Activated CD4-positive, alpha-beta T cell treated with anti-CD3 and anti-CD28 coated beads, Interleukin-2, amount 10 ng/mL, durations not matched to agents 24 days and 14 days (primary cell): ENCODE measurements at regions of chr12 and their contacts with region 1.

Region 1: GRCh38 chr12:123713398-123713797 is 1.2 kb downstream of the ATP6V0A2 start:
- DNase-seq: peak; percentile 74
- H3K4me3 Mint-ChIP-seq: peak overlapping the region; percentile 98
- H3K27ac Mint-ChIP-seq: peak overlapping the region; percentile 93
- H3K4me1 Mint-ChIP-seq: peaks cover 36% of the 10 kb centered on the region
- H3K27me3 Mint-ChIP-seq: no peaks in the 10 kb centered on the region

Region 2: GRCh38 chr12:122732170-122732569 is 981.2 kb before region 1 on chr12:
- intact Hi-C with region 1: loop called (anchors 2 kb)
- DNase-seq: peak; percentile 79
- H3K4me3 Mint-ChIP-seq: peak overlapping the region; percentile 78
- H3K27ac Mint-ChIP-seq: peak overlapping the region; percentile 86
- H3K4me1 Mint-ChIP-seq: peaks cover 62% of the 10 kb centered on the region
- H3K27me3 Mint-ChIP-seq: no peaks in the 10 kb centered on the region

Region 3: GRCh38 chr12:123580772-123581171 is 132.6 kb before region 1 on chr12:
- intact Hi-C with region 1: loop called (anchors 5 kb)
- DNase-seq: no peak
- H3K4me3 Mint-ChIP-seq: no peak overlapping the region
- H3K27ac Mint-ChIP-seq: no peak overlapping the region
- H3K4me1 Mint-ChIP-seq: peaks cover 25% of the 10 kb centered on the region
- H3K27me3 Mint-ChIP-seq: no peaks in the 10 kb centered on the region

Region 4: GRCh38 chr12:123670882-123671728 is 42.3 kb before region 1 on chr12 and contains the start of gene TCTN2:
- intact Hi-C with region 1: loop called (anchors 1 kb)
- DNase-seq: peak; percentile 98
- H3K4me3 Mint-ChIP-seq: peak within 1 kb of the TSS; percentile 89
- H3K27ac Mint-ChIP-seq: no peak within 1 kb of the TSS
- H3K4me1 Mint-ChIP-seq: peaks cover 12% of the 10 kb centered on the region
- H3K27me3 Mint-ChIP-seq: no peaks in the 10 kb centered on the region
- total RNA-seq, gene TCTN2: 3.0 and 3.1 TPM in 2 replicates

Region 5: DNA sequence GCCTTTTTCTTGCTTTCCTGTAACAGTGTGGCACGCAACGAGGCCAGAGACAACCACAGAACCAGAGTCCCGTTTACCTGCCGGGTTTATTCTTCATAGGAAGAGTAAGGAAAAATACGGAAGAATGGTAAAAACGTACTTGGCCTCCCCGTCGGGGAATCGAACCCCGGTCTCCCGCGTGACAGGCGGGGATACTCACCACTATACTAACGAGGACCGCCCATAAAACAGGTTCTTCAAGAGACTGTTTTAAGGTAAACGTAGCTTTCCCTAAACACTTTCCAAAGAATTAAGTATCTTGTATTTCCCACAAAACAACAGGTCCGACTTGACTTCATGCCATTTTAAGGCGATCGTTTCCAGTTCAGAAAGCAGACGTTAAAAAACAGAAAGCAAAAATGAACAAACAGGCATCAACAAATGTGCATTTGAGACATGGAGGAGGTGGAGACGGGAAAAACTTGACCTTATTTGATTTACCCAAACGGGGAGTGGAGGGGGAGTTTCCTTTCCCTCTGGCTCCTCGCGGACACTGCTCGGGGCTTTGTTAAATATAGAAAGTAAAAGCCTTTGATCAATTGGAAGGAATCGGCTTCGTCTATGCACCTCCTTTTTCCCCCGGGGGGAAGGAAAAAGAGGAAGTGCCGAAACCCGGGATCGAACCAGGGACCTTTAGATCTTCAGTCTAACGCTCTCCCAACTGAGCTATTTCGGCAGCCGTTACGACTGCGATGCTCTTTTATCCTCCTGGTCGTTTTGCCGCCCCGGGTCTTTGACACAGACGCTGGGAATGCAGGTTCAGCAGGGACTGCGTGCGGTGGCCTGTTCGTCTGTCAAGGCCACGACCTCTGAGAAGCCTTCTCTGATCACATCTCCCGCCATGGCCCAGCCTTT is 1214.0 kb after region 1 on chr12:
- intact Hi-C with region 1: loop called (anchors 10 kb)
- DNase-seq: peak; percentile 98
- H3K4me3 Mint-ChIP-seq: peak overlapping the region; percentile 84
- H3K27ac Mint-ChIP-seq: peak overlapping the region; percentile 97
- H3K4me1 Mint-ChIP-seq: peaks cover 29% of the 10 kb centered on the region
- H3K27me3 Mint-ChIP-seq: peaks cover 2% of the 10 kb centered on the region